Transverse colon (tissue), 4 donors: ENCODE measurements at regions of chr12 and their contacts with region 1.

Region 1: DNA sequence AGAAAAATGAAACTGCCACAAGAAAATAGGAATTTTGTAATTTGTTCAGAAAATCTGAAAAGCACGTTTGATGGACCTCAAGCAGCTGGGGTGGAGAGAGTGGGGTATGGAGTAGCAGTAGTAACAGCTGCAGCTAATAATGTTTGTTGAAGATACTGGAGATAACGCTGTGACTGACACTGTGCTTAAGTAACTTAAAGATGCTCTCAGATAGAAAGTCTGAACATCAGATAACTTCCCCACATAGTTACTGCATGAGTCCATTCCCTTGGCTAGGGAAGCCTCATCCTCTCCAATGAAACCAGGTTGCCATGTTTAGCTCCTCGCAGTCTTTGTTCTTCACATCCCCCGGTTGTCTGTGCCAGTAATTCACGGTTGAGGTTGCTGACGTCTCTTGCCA is 24.9 kb downstream of the RMST start:
- DNase-seq: no peak
- H3K4me3 ChIP-seq: no peak overlapping the region
- H3K27ac ChIP-seq: no peak overlapping the region
- H3K4me1 ChIP-seq: no peaks in the 10 kb centered on the region
- H3K27me3 ChIP-seq: no peaks in the 10 kb centered on the region
- CTCF ChIP-seq: no peak
- EP300 ChIP-seq: no peak
- POLR2A ChIP-seq: no peak

Region 2: GRCh38 chr12:97452230-97452629 is 35.2 kb before region 1 on chr12:
- in situ Hi-C with region 1: no loop called
- intact Hi-C with region 1: loop called (anchors 2 kb)
- DNase-seq: no peak
- H3K4me3 ChIP-seq: no peak overlapping the region
- H3K27ac ChIP-seq: no peak overlapping the region
- H3K4me1 ChIP-seq: no peaks in the 10 kb centered on the region
- H3K27me3 ChIP-seq: no peaks in the 10 kb centered on the region
- CTCF ChIP-seq: no peak
- EP300 ChIP-seq: no peak
- POLR2A ChIP-seq: no peak